ENCODE measurements at regions of chr1 and their contacts with region 1.

Region 1: DNA sequence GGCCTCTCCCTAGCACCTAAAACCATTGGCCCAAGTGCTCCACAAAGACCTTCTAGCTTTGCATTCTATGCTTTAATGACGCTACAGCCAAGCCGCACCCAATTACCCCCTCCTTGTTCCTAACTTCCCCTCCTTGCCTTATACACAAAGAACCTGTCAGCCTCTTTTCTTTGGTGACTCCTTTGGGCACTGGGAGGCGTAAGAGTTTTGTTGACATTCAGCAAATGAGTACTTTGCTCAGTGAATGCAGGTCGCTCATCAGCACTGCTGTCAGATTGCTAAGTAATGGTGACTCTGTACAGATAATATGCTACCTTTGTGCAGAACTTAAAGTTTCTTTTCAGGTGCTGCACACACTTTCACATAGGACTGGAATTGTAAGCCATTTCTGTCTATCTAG is 187.6 kb upstream of the FAM78B start:
- DNase-seq: no peak
- H3K4me3 ChIP-seq: no peak overlapping the region
- H3K27ac ChIP-seq: no peak overlapping the region
- H3K4me1 ChIP-seq: no peaks in the 10 kb centered on the region
- H3K27me3 ChIP-seq: no peaks in the 10 kb centered on the region
- CTCF ChIP-seq: no peak
- POLR2A ChIP-seq: no peak

Region 2: DNA sequence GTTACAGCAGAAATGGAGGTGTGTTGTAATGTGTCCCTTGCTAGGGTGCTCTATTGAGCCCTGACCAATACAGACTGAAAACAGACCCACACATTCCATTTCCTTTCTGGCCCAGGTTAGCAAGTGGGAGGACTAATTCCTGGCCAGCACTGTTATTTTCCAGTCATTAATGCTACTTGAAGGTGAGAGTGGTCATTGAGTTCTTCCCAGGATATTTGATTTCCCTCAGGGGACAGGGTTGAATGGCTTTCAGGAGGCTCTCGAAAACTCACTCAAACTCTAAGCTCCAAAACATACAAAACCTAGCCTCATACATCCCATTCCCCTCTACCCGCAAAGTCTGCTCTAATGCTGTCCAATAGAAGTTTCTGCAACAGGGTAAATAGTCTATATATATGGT is 804.4 kb before region 1 on chr1:
- intact Hi-C with region 1: loop called (anchors 5 kb)
- DNase-seq: no peak
- H3K4me3 ChIP-seq: no peak overlapping the region
- H3K27ac ChIP-seq: no peak overlapping the region
- H3K4me1 ChIP-seq: no peaks in the 10 kb centered on the region
- H3K27me3 ChIP-seq: no peaks in the 10 kb centered on the region
- CTCF ChIP-seq: no peak
- POLR2A ChIP-seq: no peak

Region 3: GRCh38 chr1:166330096-166330495 is 24.3 kb before region 1 on chr1:
- intact Hi-C with region 1: no loop called
- DNase-seq: no peak
- H3K4me3 ChIP-seq: no peak overlapping the region
- H3K27ac ChIP-seq: no peak overlapping the region
- H3K4me1 ChIP-seq: no peaks in the 10 kb centered on the region
- H3K27me3 ChIP-seq: no peaks in the 10 kb centered on the region
- CTCF ChIP-seq: no peak
- POLR2A ChIP-seq: no peak